Ovary (tissue), 10 donors: ENCODE measurements at regions of chr16 and their contacts with region 1.

Region 1: GRCh38 chr16:88856828-88857733 is at the starts of genes GALNS and TRAPPC2L:
- DNase-seq: peak; percentile 99 to 100 (median 100)
- H3K4me3 ChIP-seq: peak within 1 kb of the TSS; percentile 75
- H3K27ac ChIP-seq: peak within 1 kb of the TSS; percentile 10 to 73
- H3K4me1 ChIP-seq: peaks cover 5% of the 10 kb centered on the region
- H3K27me3 ChIP-seq: no peaks in the 10 kb centered on the region
- CTCF ChIP-seq: peak in 1 of 3 donors; percentile 22
- EP300 ChIP-seq: no peak
- POLR2A ChIP-seq: peak; percentile 67
- total RNA-seq, gene GALNS: 14.1 to 30.1 (median 21.6) TPM
- total RNA-seq, gene TRAPPC2L: 37.2 to 65.7 (median 56.3) TPM

Region 2: DNA sequence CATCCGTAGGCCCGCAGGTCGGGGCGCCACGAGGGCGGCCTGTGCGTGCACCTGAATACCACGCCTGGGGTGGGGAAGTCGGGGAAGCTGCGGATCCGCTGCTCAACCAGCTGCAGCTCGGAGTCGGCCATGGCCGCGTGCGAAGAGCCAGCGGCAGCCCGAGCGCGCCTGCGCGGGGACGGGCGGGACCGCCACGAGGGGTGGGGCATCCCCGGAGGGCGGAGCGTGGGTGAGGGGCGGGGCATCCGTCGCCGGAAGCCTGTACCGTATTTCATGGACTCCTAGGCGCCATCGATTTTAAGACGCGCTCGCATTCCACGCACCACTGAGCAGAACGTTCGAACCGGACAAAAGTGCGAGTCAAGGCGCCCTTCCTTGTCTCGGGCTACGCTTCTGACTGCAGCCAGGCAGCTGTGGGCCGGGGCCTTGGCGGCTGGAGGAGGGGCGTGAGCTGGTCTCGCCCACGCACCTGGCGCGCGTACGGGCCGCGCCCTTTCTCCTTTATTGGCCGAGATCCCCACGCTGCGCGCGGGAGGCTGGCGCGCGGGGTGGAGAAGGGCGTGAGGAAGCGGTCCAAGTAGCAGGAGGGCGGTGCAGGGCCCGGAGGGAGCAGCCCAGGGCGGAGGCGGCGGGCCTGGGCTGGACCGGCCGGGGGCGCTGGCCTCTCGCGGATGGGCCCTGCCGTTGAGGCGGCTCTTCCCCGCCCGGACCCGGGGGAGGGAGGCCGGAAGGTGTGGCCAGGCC is 45.1 kb before region 1 on chr16 and contains the start of gene APRT:
- intact Hi-C with region 1: loop called in 3 of 4 experiments (anchors 2 to 5 kb)
- DNase-seq: peak; percentile 95 to 99 (median 97)
- H3K4me3 ChIP-seq: peak within 1 kb of the TSS; percentile 65
- H3K27ac ChIP-seq: peak within 1 kb of the TSS; percentile 93 to 95
- H3K4me1 ChIP-seq: peaks cover 7% of the 10 kb centered on the region
- H3K27me3 ChIP-seq: no peaks in the 10 kb centered on the region
- CTCF ChIP-seq: peak in 2 of 3 donors; percentile 37 to 55
- EP300 ChIP-seq: no peak
- POLR2A ChIP-seq: peak; percentile 73
- total RNA-seq, gene APRT: 51.3 to 150 (median 74.1) TPM

Region 3: GRCh38 chr16:88830258-88830657 is 26.8 kb before region 1 on chr16:
- intact Hi-C with region 1: no loop called
- DNase-seq: peak in 3 of 5 donors; percentile 62 to 73 (median 65)
- H3K4me3 ChIP-seq: no peak overlapping the region
- H3K27ac ChIP-seq: no peak overlapping the region
- H3K4me1 ChIP-seq: no peaks in the 10 kb centered on the region
- H3K27me3 ChIP-seq: no peaks in the 10 kb centered on the region
- CTCF ChIP-seq: no peak
- EP300 ChIP-seq: no peak
- POLR2A ChIP-seq: no peak